Activated naive CD4-positive, alpha-beta T cell treated with anti-CD3 and anti-CD28 coated beads for 36 hours (primary cell): ENCODE measurements at regions of chr1 and their contacts with region 1.

Region 1: DNA sequence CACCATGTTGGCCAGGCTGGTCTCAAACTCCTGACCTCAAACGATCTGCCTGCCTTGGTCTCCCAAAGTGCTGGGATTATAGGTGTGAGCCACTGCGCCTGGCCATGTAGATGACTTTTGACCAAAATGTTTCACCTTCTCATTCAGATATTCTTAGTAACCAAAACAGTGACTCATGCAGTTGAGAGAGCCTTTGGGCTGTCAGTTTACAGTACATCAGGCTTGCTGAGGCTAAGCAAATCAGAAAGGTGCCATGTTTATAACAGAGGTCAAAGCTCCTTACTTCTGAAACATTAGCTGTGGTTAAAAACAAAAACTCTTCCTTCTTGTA is 21.0 kb downstream of the CNIH4 start:
- DNase-seq: peak; percentile 66
- H3K4me3 Mint-ChIP-seq: no peak overlapping the region
- H3K27ac Mint-ChIP-seq: peak overlapping the region; percentile 67
- H3K4me1 Mint-ChIP-seq: peaks cover 91% of the 10 kb centered on the region
- H3K27me3 Mint-ChIP-seq: no peaks in the 10 kb centered on the region

Region 2: DNA sequence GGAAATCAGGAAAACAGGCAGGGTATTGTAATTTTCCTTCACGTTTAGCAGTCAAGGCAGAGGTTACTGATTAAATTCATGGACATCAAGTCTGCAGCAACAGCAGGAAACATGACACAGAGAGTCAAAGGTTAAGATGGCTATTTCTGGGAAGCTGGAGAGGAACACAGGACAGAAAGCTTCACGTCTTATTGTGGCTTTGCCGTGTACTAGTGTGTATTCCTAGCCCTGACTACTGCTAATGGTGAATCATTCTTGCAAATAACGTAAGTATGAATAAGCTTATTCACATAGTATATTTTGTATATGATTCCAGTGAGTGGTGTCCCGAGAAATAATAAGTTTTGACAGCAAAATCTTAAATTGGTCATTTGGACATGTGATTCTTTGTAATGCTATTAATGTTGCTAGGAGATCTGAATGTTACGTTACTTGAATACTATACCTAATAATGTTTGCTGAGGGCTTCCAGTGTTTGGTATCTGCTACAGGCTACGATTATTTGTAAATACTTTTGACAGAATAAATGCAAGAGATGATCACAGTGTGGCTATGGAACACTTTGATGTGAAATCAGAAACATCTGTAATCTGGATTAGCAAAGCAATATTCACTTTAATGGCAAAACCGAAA is 1485.4 kb before region 1 on chr1:
- CTCF ChIA-PET with region 1: no interaction called
- intact Hi-C with region 1: no loop called
- DNase-seq: no peak
- H3K4me3 Mint-ChIP-seq: no peak overlapping the region
- H3K27ac Mint-ChIP-seq: no peak overlapping the region
- H3K4me1 Mint-ChIP-seq: peaks cover 21% of the 10 kb centered on the region
- H3K27me3 Mint-ChIP-seq: no peaks in the 10 kb centered on the region

Region 3: GRCh38 chr1:224108991-224109390 is 268.6 kb before region 1 on chr1:
- CTCF ChIA-PET with region 1: no interaction called
- intact Hi-C with region 1: no loop called
- DNase-seq: no peak
- H3K4me3 Mint-ChIP-seq: no peak overlapping the region
- H3K27ac Mint-ChIP-seq: no peak overlapping the region
- H3K4me1 Mint-ChIP-seq: peaks cover 8% of the 10 kb centered on the region
- H3K27me3 Mint-ChIP-seq: no peaks in the 10 kb centered on the region

Region 4: GRCh38 chr1:224168859-224169380 is 208.7 kb before region 1 on chr1:
- CTCF ChIA-PET with region 1: no interaction called
- intact Hi-C with region 1: loop called (anchors 1 kb)
- DNase-seq: peak; percentile 60
- H3K4me3 Mint-ChIP-seq: no peak overlapping the region
- H3K27ac Mint-ChIP-seq: peak overlapping the region; percentile 9
- H3K4me1 Mint-ChIP-seq: peaks cover 32% of the 10 kb centered on the region
- H3K27me3 Mint-ChIP-seq: no peaks in the 10 kb centered on the region

Region 5: DNA sequence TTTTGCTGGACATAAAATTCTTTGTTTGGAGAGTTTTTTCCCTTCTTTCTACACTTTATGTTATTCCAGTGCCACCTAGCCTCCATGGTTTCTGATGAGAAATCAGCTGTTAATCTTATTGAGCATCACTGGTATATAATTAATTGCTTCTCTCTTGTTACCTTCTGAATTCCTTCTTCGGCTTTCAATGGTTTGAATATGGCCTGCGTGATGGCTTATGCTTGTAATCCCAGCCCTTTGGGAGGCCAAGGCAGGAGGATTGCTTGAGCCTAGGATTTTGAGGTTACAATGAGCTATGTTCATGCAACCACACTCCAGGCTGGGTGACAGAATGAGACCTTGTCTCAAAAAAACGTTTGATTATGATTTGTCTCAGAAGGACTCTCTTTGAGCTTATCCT is 34.0 kb before region 1 on chr1:
- CTCF ChIA-PET with region 1: no interaction called
- intact Hi-C with region 1: loop called (anchors 2 kb)
- DNase-seq: no peak
- H3K4me3 Mint-ChIP-seq: no peak overlapping the region
- H3K27ac Mint-ChIP-seq: no peak overlapping the region
- H3K4me1 Mint-ChIP-seq: peaks cover 13% of the 10 kb centered on the region
- H3K27me3 Mint-ChIP-seq: no peaks in the 10 kb centered on the region

Region 6: GRCh38 chr1:224392411-224393249 is 15.0 kb after region 1 on chr1:
- CTCF ChIA-PET with region 1: no interaction called
- intact Hi-C with region 1: loop called (anchors 1 kb)
- DNase-seq: no peak
- H3K4me3 Mint-ChIP-seq: no peak overlapping the region
- H3K27ac Mint-ChIP-seq: peak overlapping the region; percentile 51
- H3K4me1 Mint-ChIP-seq: peaks cover 27% of the 10 kb centered on the region
- H3K27me3 Mint-ChIP-seq: no peaks in the 10 kb centered on the region